Mammary epithelial cell (primary cell): ENCODE measurements at regions of chr16 and their contacts with region 1.

Region 1: DNA sequence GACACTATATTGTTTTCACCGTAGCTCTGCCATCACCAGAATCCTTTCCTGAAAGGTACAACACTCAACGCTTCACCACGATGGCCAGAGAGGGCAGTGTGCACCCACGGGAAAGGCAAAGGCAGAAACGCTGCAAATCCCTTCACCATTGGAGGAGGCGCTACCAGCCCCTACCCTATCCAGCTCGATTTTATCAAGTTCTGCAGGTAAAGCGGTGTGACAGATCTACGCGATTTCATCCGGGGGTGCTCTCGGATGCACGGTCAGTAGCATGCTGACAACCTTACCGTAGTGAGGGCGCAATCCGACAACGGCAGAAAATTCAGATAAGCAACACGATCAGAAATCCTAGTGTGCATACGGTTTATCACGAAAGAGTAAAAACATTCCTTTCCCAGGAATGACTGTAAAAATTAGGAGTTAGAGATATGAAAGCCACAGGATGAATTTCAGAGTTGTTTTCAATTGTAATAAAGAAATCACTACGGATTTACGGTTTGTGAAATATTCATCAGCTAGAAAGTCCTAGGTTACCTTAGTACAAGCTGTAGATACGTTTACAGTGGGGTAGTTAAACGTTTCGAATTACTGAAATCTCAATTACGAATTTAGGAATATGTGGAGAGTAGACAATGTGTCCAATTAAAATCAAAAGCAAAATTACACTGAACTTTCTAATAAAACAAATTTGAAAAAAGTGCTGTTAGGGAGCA is 1.8 kb downstream of the NETO2 start:
- DNase-seq: peak; percentile 92
- H3K4me3 ChIP-seq: peak overlapping the region; percentile 68 to 78 (median 71)
- H3K27ac ChIP-seq: peak overlapping the region; percentile 70
- H3K4me1 ChIP-seq: peaks cover 30% of the 10 kb centered on the region
- H3K27me3 ChIP-seq: no peaks in the 10 kb centered on the region
- CTCF ChIP-seq: peak; percentile 98 to 99

Region 2: GRCh38 chr16:46947900-46948547 is 193.9 kb before region 1 on chr16:
- CTCF ChIA-PET with region 1: no interaction called
- dilution Hi-C with region 1: no loop called
- in situ Hi-C with region 1: no loop called
- intact Hi-C with region 1: loop called (anchors 2 kb)
- DNase-seq: peak; percentile 26
- H3K4me3 ChIP-seq: no peak overlapping the region
- H3K27ac ChIP-seq: no peak overlapping the region
- H3K4me1 ChIP-seq: no peaks in the 10 kb centered on the region
- H3K27me3 ChIP-seq: no peaks in the 10 kb centered on the region
- CTCF ChIP-seq: peak; percentile 48 to 62

Region 3: GRCh38 chr16:47460711-47461597 is 319.0 kb after region 1 on chr16 and contains the starts of genes ITFG1 and PHKB:
- CTCF ChIA-PET with region 1: no interaction called
- dilution Hi-C with region 1: no loop called
- in situ Hi-C with region 1: no loop called
- intact Hi-C with region 1: loop called (anchors 5 kb)
- DNase-seq: peak; percentile 94
- H3K4me3 ChIP-seq: peak within 1 kb of the TSS; percentile 73 to 97 (median 95)
- H3K27ac ChIP-seq: peak within 1 kb of the TSS; percentile 91
- H3K4me1 ChIP-seq: peaks cover 27% of the 10 kb centered on the region
- H3K27me3 ChIP-seq: no peaks in the 10 kb centered on the region
- CTCF ChIP-seq: no peak
- total RNA-seq, gene ITFG1: 46.0 to 80.2 TPM
- total RNA-seq, gene PHKB: 57.4 to 100 TPM

Region 4: DNA sequence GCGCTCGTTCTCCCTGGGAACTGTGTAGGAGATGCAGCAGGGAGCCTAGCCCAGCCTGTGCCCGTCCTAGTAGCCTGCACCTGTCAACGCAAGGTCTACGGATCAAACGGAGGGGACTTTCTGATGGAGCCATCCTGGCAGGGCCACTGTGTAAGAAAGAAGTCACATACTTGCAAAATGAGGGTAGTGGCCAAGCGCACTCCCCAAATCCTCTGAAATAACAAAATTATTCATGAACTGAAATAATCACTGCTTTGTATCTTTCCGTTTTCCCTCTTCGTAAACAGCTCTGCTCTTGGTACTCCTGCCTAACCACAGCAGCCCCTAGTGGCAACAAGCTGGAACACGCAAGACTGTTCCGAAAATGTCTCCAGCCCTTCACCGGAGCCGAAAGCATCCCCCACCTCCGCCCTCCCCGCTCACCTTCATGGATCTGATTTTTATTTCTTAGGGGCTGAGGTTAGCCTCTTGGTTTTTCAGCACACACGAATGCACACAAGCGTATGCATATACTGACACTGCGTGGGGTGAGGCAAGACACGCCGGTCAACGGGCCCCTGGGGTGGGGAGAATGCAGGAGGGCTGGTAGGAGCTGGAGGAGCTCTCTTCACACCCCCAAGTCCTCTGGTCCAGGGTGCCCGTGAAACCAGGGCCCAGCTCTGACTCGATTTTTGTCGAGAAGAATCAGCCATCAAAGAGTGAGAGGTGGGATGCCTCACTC is 913.1 kb after region 1 on chr16:
- CTCF ChIA-PET with region 1: no interaction called
- dilution Hi-C with region 1: no loop called
- in situ Hi-C with region 1: no loop called
- intact Hi-C with region 1: loop called (anchors 1 kb)
- DNase-seq: peak; percentile 41
- H3K4me3 ChIP-seq: no peak overlapping the region
- H3K27ac ChIP-seq: no peak overlapping the region
- H3K4me1 ChIP-seq: peaks cover 13% of the 10 kb centered on the region
- H3K27me3 ChIP-seq: no peaks in the 10 kb centered on the region
- CTCF ChIP-seq: peak; percentile 96 to 98

Region 5: GRCh38 chr16:48156790-48157209 is 1014.9 kb after region 1 on chr16:
- CTCF ChIA-PET with region 1: no interaction called
- dilution Hi-C with region 1: no loop called
- in situ Hi-C with region 1: loop called in 1 of 2 experiments (anchors 10 kb)
- intact Hi-C with region 1: loop called (anchors 1 kb)
- DNase-seq: peak; percentile 66
- H3K4me3 ChIP-seq: no peak overlapping the region
- H3K27ac ChIP-seq: no peak overlapping the region
- H3K4me1 ChIP-seq: peaks cover 19% of the 10 kb centered on the region
- H3K27me3 ChIP-seq: no peaks in the 10 kb centered on the region
- CTCF ChIP-seq: peak; percentile 87 to 92

Region 6: GRCh38 chr16:48526058-48526957 is 1384.4 kb after region 1 on chr16:
- CTCF ChIA-PET with region 1: no interaction called
- dilution Hi-C with region 1: no loop called
- in situ Hi-C with region 1: no loop called
- intact Hi-C with region 1: loop called (anchors 2 kb)
- DNase-seq: peak; percentile 75
- H3K4me3 ChIP-seq: no peak overlapping the region
- H3K27ac ChIP-seq: peak overlapping the region; percentile 9
- H3K4me1 ChIP-seq: peaks cover 5% of the 10 kb centered on the region
- H3K27me3 ChIP-seq: no peaks in the 10 kb centered on the region
- CTCF ChIP-seq: peak; percentile 54 to 81